ENCODE measurements at regions of chr15 and their contacts with region 1.

Region 1: DNA sequence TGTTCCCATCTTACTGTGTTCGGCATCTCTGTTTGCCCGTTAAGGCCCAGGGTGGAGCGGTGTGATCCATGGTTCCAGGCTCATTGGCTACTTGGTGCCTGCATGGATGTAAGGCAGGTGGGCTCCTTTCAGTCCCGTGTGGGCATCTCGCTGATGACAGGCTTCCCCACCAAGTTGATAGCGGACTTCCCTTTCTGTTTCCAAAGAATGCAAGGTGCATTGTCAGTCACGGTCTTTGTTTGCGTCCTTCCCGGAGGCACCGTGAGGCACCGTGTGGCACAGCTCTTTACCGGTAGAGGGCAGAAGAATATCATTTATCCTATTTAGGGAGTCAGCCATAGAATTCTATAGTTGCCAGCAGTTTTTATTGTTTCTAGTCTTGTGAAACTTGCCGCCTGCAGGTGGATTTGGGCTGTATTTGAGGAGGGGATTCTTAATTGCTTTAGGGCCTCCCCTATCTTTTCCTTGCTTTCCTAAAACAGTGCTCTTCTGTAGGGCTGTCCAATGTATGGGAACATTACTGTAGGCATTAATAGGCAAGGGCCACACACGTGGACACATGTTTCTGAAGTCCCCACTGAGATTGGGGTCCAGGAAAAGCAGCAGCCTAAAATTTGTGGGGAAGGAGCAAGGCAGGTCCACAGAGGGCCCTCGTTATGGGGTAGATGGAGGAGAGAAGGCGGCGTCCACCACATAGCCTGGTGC is 244.1 kb downstream of the SLCO3A1 start:
- DNase-seq: peak; percentile 30
- ATAC-seq: peak; percentile 96
- H3K4me3 ChIP-seq: no peak overlapping the region
- H3K27ac ChIP-seq: no peak overlapping the region
- H3K4me1 ChIP-seq: no peaks in the 10 kb centered on the region
- H3K27me3 ChIP-seq: peaks cover 3 to 19% of the 10 kb centered on the region in 2 experiments; a peak in 3 of 5 replicates
- CTCF ChIP-seq: peak; percentile 87
- EP300 ChIP-seq: no peak
- POLR2A ChIP-seq: no peak
- RAD21 ChIP-seq: peak; percentile 83

Region 2: DNA sequence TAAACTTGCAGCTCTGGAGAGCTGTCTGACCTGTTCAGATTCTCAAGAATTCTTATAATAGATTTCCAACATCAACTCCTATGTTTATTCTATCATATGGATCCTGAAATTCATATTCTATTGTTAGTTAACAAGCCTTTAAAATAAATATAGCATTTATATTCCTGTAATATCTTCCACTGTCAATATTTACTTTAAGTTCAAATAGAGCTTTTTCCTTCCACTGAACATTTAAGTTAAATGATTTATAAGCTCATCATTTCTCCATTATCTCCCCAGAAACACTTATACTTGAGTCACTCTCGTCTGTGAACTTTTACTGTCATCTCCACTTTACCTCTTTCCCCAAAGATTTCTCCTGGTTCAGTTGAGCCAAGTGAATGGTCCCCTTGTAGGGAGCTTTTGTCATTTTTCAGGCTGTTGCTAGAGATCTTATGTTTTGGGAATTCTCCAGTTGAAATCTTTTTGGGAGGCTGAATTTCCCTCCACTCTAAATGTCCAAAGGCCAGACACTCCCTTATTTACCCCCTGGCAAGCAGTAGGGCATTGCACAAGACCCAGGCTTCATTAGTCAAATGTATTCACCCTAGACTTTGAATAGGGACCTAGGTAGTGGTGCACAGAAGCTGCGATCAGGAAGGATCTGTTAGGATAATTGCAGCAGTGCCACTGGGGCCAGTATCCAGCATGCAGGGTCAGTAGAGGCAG is 600.8 kb before region 1 on chr15:
- CTCF ChIA-PET with region 1: no interaction called
- POLR2A ChIA-PET with region 1: no interaction called
- in situ Hi-C with region 1: no loop called
- intact Hi-C with region 1: no loop called
- DNase-seq: no peak
- ATAC-seq: peak; percentile 40; the same call in 1 of the 3 replicates
- H3K4me3 ChIP-seq: no peak overlapping the region
- H3K27ac ChIP-seq: no peak overlapping the region
- H3K4me1 ChIP-seq: no peaks in the 10 kb centered on the region
- H3K27me3 ChIP-seq: no peaks in the 10 kb centered on the region
- CTCF ChIP-seq: no peak
- EP300 ChIP-seq: no peak
- POLR2A ChIP-seq: no peak
- RAD21 ChIP-seq: no peak

Region 3: DNA sequence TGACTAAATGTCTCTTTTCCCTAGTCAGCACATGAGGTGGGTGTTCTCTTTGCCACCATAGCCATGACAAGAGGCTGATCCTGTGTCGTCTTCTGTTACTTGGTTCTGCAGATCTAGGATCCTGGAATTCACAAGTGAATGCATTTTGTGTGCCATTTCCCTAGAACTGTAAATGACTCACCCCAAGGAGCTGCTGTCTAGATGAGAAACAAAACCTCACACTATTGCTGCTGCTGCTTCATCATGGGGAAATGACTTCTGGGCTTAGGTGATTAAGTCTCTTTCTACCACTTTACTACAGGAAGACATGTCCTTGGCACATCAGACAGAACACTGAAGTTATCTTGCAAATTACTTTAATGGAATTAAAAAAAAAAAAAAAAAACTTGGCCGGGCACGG is 189.2 kb before region 1 on chr15:
- CTCF ChIA-PET with region 1: no interaction called
- POLR2A ChIA-PET with region 1: no interaction called
- in situ Hi-C with region 1: no loop called
- intact Hi-C with region 1: no loop called
- DNase-seq: no peak
- ATAC-seq: no peak
- H3K4me3 ChIP-seq: no peak overlapping the region
- H3K27ac ChIP-seq: no peak overlapping the region
- H3K4me1 ChIP-seq: no peaks in the 10 kb centered on the region
- H3K27me3 ChIP-seq: peaks cover 0 to 1% of the 10 kb centered on the region in 2 experiments; a peak in 1 of 5 replicates
- CTCF ChIP-seq: no peak
- EP300 ChIP-seq: no peak
- POLR2A ChIP-seq: no peak
- RAD21 ChIP-seq: no peak

Region 4: DNA sequence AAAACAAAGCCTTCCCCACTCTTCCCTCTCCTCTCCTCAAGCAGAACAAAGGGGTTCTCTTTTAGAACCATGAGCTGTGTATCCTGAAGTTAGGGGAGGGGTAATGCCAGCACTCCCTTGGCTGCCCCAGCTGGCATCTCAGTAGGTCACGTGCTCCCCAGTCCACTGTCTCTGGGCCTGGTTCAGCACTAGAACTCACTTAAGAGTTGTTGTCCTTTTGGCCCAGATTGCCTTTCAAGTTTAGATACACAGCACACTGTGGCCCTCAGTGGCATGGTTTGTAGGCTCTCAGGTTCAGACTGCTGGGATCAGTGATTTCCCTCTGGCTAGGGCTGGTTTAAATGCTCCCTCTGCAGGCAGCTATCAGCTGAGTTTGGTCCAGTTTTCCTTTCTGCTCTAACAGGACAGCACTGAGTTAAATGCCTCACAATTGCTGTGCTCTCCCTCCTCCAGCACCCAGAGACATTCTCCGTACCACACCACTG is 107.7 kb after region 1 on chr15:
- CTCF ChIA-PET with region 1: interaction called, 18 read pairs
- POLR2A ChIA-PET with region 1: no interaction called
- in situ Hi-C with region 1: no loop called
- intact Hi-C with region 1: loop called (anchors 1 kb)
- DNase-seq: peak; percentile 3
- ATAC-seq: peak; percentile 78
- H3K4me3 ChIP-seq: no peak overlapping the region
- H3K27ac ChIP-seq: no peak overlapping the region
- H3K4me1 ChIP-seq: no peaks in the 10 kb centered on the region
- H3K27me3 ChIP-seq: no peaks in the 10 kb centered on the region
- CTCF ChIP-seq: peak; percentile 75
- EP300 ChIP-seq: no peak
- POLR2A ChIP-seq: no peak
- RAD21 ChIP-seq: peak; percentile 48; the same call in 1 of the 2 replicates

Region 5: DNA sequence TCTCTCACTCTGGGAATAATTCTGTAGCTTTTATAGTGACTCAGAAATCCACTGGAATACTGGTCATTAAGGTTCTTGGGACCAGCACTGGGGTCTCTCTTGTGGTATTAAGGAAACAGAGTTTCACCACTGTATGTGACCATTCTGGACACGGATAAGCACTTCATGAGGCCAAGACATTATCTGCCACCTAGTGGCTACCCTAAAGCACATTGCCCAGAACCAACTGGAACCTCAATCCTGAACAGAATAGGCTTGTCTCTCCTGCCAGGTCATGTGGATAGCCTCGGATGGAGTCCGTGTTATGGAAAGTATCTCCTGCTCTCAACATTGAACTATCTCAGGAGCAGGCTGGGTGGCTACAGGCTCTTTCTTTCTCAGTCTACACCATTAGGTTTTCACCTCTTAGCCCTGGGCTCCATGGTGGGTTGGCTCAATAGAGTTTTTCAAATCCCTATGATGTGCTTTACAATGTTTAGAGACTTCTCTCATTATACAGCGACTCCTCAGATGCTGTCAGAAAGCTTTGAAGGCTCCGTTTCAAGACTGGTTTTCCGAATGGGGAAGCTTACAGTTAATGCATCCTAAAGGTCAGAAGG is 128.5 kb after region 1 on chr15:
- CTCF ChIA-PET with region 1: interaction called, 30 read pairs
- POLR2A ChIA-PET with region 1: no interaction called
- in situ Hi-C with region 1: loop called (anchors 5 kb)
- intact Hi-C with region 1: loop called (anchors 1 kb)
- DNase-seq: peak; percentile 25
- ATAC-seq: peak; percentile 88
- H3K4me3 ChIP-seq: no peak overlapping the region
- H3K27ac ChIP-seq: no peak overlapping the region
- H3K4me1 ChIP-seq: no peaks in the 10 kb centered on the region
- H3K27me3 ChIP-seq: no peaks in the 10 kb centered on the region
- CTCF ChIP-seq: peak; percentile 69
- EP300 ChIP-seq: no peak
- POLR2A ChIP-seq: no peak
- RAD21 ChIP-seq: peak; percentile 48; the same call in 1 of the 2 replicates

Region 6: GRCh38 chr15:92244703-92245102 is 147.1 kb after region 1 on chr15:
- CTCF ChIA-PET with region 1: no interaction called
- POLR2A ChIA-PET with region 1: no interaction called
- in situ Hi-C with region 1: no loop called
- intact Hi-C with region 1: no loop called
- DNase-seq: no peak
- ATAC-seq: no peak
- H3K4me3 ChIP-seq: no peak overlapping the region
- H3K27ac ChIP-seq: no peak overlapping the region
- H3K4me1 ChIP-seq: no peaks in the 10 kb centered on the region
- H3K27me3 ChIP-seq: peaks cover 0 to 2% of the 10 kb centered on the region in 2 experiments; a peak in 1 of 5 replicates
- CTCF ChIP-seq: no peak
- EP300 ChIP-seq: no peak
- POLR2A ChIP-seq: no peak
- RAD21 ChIP-seq: no peak

Region 7: DNA sequence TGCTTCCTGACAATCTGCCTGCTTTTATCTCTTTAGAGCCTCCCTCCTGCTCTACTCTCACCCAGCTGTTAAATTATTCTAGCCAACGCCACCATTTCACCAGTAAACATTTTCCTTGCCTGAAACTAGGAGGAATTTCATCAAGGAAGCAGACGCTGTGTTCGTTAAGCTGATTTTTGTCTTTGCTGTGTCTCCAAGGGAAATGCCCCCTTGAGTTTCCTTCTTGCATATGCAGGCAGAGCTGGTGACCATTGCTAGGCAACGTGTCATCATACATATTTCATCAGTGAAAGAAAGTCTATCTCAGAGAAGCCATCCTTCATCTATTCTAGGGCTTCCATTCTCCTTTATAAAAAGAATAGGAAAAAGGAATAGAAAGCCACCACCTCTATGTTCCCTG is 209.0 kb after region 1 on chr15:
- CTCF ChIA-PET with region 1: no interaction called
- POLR2A ChIA-PET with region 1: no interaction called
- in situ Hi-C with region 1: no loop called
- intact Hi-C with region 1: loop called (anchors 2 kb)
- DNase-seq: peak; percentile 13
- ATAC-seq: no peak
- H3K4me3 ChIP-seq: no peak overlapping the region
- H3K27ac ChIP-seq: no peak overlapping the region
- H3K4me1 ChIP-seq: no peaks in the 10 kb centered on the region
- H3K27me3 ChIP-seq: peaks cover 0 to 9% of the 10 kb centered on the region in 2 experiments; a peak in 1 of 5 replicates
- CTCF ChIP-seq: no peak
- EP300 ChIP-seq: no peak
- POLR2A ChIP-seq: no peak
- RAD21 ChIP-seq: no peak

Region 8: GRCh38 chr15:92383519-92384326 is 286.1 kb after region 1 on chr15:
- CTCF ChIA-PET with region 1: interaction called, 25 read pairs
- POLR2A ChIA-PET with region 1: no interaction called
- in situ Hi-C with region 1: loop called (anchors 5 kb)
- intact Hi-C with region 1: no loop called
- DNase-seq: peak; percentile 15
- ATAC-seq: peak; percentile 68
- H3K4me3 ChIP-seq: no peak overlapping the region
- H3K27ac ChIP-seq: no peak overlapping the region
- H3K4me1 ChIP-seq: no peaks in the 10 kb centered on the region
- H3K27me3 ChIP-seq: peaks cover 0 to 26% of the 10 kb centered on the region in 2 experiments; a peak in 2 of 5 replicates
- CTCF ChIP-seq: peak; percentile 71
- EP300 ChIP-seq: no peak
- POLR2A ChIP-seq: no peak
- RAD21 ChIP-seq: peak; percentile 40; the same call in 1 of the 2 replicates

Region 9: DNA sequence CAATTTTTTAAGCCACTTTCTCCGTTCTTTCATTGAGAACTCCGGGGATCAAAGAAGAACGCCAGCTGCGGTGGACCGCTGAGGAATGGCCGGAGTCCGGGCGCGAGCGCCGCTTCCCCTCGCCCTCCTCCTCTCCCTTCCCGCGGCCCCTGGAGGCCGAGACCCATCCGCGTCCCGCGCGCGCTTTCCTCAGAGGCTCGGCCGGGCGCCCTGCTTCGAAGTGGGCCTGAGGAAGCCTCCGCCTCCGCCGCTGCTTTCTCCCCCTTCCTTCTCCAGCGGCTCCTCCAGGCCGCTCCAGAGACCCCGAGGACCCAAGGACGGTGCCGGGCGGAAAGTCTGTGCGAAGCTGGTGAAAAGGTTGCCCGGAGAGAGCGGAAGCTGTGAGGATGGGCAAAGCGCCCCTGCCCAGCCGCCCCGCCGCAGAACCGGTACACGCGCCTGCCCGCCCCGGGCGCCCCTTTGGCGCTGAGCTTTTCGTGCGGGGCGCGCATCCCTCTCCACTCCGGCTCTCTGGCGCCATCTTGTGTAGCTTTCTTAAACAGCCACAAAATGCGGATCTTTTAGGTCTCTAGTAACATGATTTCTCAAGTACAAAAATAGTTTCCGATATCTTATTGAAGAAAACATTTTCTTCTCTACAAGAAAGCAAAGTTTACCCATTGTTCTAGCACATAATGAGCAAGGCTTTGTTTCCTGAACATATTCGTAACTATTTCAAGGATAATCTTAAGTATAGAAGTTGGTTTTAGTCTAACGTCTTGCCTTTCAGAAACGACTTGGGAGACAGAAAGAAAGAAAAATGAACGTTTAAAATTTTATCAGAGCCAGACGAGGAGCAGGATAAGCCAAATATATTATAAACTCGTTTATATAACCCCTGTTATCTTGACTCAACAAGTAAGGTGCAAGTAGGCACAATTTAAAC is 617.1 kb after region 1 on chr15:
- CTCF ChIA-PET with region 1: interaction called, 7 read pairs
- POLR2A ChIA-PET with region 1: no interaction called
- in situ Hi-C with region 1: no loop called
- intact Hi-C with region 1: loop called (anchors 10 kb)
- DNase-seq: peak; percentile 44
- ATAC-seq: peak; percentile 91
- H3K4me3 ChIP-seq: peak overlapping the region; percentile 51 to 70 (median 63)
- H3K27ac ChIP-seq: no peak overlapping the region
- H3K4me1 ChIP-seq: 0 out of 2 replicates have a peak, but pooled peaks cover 6% of the 10 kb centered on the region
- H3K27me3 ChIP-seq: peaks cover 1 to 14% of the 10 kb centered on the region in 2 experiments; a peak in 3 of 5 replicates
- CTCF ChIP-seq: peak; percentile 89
- EP300 ChIP-seq: no peak
- POLR2A ChIP-seq: no peak
- RAD21 ChIP-seq: peak; percentile 80

Measured in HepG2 (cell line).